CD8-positive, alpha-beta T cell (primary cell): ENCODE measurements at regions of chr4 and their contacts with region 1.

Region 1: DNA sequence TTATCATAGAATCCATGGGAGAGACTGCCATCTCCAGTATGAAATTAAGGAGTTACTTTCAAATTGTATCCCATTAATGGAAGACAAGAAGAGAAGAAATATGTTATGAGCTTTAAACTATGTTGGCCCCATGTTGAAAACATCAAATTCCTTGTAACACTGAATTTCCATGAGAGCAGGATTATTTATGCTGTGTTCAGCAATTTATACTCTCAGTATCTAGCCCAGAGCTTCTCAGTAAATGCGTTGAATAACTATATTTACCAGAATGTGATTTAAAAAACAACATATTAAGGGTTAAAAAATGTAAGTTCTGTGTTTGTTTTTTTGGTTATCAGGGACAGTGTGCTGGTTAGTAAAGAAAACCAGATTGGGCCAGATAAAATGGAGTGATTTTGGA is 74.2 kb downstream of the ADGRL3 start:
- DNase-seq: no peak
- ATAC-seq: no peak
- H3K4me3 ChIP-seq: no peak overlapping the region
- H3K4me3 Mint-ChIP-seq: no peak overlapping the region
- H3K27ac ChIP-seq: no peak overlapping the region
- H3K27ac Mint-ChIP-seq: no peak overlapping the region
- H3K4me1 ChIP-seq: no peaks in the 10 kb centered on the region
- H3K4me1 Mint-ChIP-seq: no peaks in the 10 kb centered on the region
- H3K27me3 ChIP-seq: no peaks in the 10 kb centered on the region
- H3K27me3 Mint-ChIP-seq: no peaks in the 10 kb centered on the region
- CTCF ChIP-seq: no peak

Region 2: GRCh38 chr4:61041527-61041926 is 232.8 kb before region 1 on chr4:
- CTCF ChIA-PET with region 1: no interaction called
- POLR2A ChIA-PET with region 1: no interaction called
- intact Hi-C with region 1: no loop called
- DNase-seq: no peak
- ATAC-seq: no peak
- H3K4me3 ChIP-seq: no peak overlapping the region
- H3K4me3 Mint-ChIP-seq: no peak overlapping the region
- H3K27ac ChIP-seq: no peak overlapping the region
- H3K27ac Mint-ChIP-seq: no peak overlapping the region
- H3K4me1 ChIP-seq: no peaks in the 10 kb centered on the region
- H3K4me1 Mint-ChIP-seq: no peaks in the 10 kb centered on the region
- H3K27me3 ChIP-seq: no peaks in the 10 kb centered on the region
- H3K27me3 Mint-ChIP-seq: no peaks in the 10 kb centered on the region
- CTCF ChIP-seq: no peak

Region 3: GRCh38 chr4:61225656-61226055 is 48.6 kb before region 1 on chr4:
- CTCF ChIA-PET with region 1: no interaction called
- POLR2A ChIA-PET with region 1: no interaction called
- intact Hi-C with region 1: loop called in 1 of 2 experiments (anchors 1 kb)
- DNase-seq: no peak
- ATAC-seq: no peak
- H3K4me3 ChIP-seq: no peak overlapping the region
- H3K4me3 Mint-ChIP-seq: no peak overlapping the region
- H3K27ac ChIP-seq: no peak overlapping the region
- H3K27ac Mint-ChIP-seq: no peak overlapping the region
- H3K4me1 ChIP-seq: no peaks in the 10 kb centered on the region
- H3K4me1 Mint-ChIP-seq: no peaks in the 10 kb centered on the region
- H3K27me3 ChIP-seq: no peaks in the 10 kb centered on the region
- H3K27me3 Mint-ChIP-seq: no peaks in the 10 kb centered on the region
- CTCF ChIP-seq: no peak